A673 (cell line): ENCODE measurements at regions of chr2 and their contacts with region 1.

Region 1: DNA sequence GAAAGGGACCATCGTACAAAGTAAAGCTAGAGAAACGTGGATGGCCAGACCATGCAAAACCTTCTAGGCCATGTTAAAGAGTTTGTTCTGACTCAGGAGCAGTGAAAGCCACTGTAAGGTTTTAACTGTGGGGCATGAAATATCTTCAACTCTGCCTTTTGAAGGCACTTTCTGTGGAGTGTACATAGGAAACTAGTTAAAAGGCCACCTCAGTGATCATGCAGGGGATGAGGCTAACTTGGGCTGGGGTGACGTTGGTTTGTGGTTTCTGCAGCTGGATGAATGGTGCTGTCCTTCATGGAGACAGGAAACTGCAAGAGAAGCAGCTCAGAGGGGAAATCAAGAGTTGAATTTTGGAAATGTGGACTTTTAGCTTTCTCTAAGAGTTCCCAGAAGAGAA is 190.7 kb downstream of the CDCA7 start:
- DNase-seq: no peak
- H3K4me3 ChIP-seq: no peak overlapping the region
- H3K27ac ChIP-seq: no peak overlapping the region
- H3K4me1 ChIP-seq: no peaks in the 10 kb centered on the region
- H3K27me3 ChIP-seq: peaks cover 18% of the 10 kb centered on the region
- CTCF ChIP-seq: no peak

Region 2: DNA sequence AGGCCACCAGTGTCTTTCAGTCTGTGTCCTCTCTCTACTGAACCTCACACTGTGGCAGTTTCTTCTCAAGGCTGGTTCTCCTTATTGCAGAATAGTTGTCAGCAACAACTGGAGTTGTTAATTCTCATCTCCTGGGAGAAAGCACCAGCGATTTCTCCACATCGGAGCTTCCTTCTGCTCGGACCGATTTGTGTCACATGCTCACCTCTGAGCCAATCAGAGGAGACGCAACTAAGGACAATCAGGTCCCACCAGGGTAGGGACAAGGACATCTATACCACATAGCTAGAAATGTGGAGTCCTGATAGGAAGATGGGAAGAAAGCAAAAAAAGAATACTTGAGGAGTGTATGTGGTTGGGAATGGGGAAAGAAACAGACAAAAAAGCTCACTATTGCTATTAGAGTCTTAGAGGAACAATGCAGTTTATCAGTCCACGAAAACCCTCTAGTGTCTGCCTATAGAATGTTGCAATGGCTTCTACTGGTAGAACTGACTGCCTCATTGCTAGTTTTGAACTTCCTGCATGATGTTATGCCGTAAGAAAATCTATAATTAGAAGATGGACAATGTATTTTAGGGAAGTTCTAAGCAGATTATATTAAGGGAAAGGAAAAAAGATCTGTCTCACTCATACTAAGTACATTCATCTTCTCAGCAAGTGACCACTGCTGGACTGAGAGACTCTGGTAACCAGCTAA is 21.0 kb before region 1 on chr2:
- CTCF ChIA-PET with region 1: no interaction called
- POLR2A ChIA-PET with region 1: interaction called, 16 read pairs
- intact Hi-C with region 1: no loop called
- DNase-seq: no peak
- H3K4me3 ChIP-seq: no peak overlapping the region
- H3K27ac ChIP-seq: no peak overlapping the region
- H3K4me1 ChIP-seq: no peaks in the 10 kb centered on the region
- H3K27me3 ChIP-seq: peaks cover 34% of the 10 kb centered on the region
- CTCF ChIP-seq: no peak